Left cardiac atrium (tissue), 4 donors: ENCODE measurements at regions of chr1 and their contacts with region 1.

Region 1: GRCh38 chr1:145845514-145846161 is at the start of gene NUDT17:
- DNase-seq: peak; percentile 88
- ATAC-seq: peak; percentile 86 to 87
- total RNA-seq, gene NUDT17: 3.6 to 3.7 TPM

Region 2: DNA sequence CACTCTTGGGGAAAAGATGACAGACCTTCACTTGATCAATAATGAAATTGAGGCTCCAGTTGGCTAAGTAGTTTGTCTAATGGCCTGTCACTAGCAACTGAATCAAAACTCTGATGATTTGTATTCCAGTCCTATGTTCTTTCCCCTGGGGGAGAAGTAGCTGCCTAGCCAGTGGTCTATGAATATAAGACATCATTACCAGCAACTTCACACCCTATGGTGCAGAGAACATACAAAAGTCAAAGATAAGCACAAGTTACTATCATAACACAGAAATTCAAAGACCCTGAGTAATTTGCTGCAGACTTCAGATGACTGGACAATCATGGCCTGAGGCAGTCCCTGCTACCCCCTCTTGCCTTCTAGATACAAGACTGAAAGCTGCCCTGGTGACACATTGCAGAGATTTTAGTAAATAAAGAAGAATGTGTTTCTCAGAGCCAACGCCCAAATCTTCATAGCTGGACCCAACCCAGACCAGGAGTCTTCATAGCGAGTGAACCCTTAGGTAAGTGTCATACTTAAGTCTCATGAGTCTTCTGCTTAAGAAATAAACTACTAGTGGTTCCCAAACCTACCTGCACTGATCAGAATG is 139.5 kb before region 1 on chr1:
- intact Hi-C with region 1: no loop called
- DNase-seq: no peak
- ATAC-seq: no peak

Region 3: GRCh38 chr1:145901318-145902021 is 55.8 kb after region 1 on chr1:
- intact Hi-C with region 1: no loop called
- DNase-seq: no peak
- ATAC-seq: no peak

Region 4: GRCh38 chr1:146012737-146013403 is 167.2 kb after region 1 on chr1:
- intact Hi-C with region 1: loop called (anchors 2 to 5 kb)
- DNase-seq: no peak
- ATAC-seq: peak; percentile 48 to 50